Posterior vena cava (tissue), 2 donors: ENCODE measurements at regions of chr1 and their contacts with region 1.

Region 1: GRCh38 chr1:19169642-19170041 is 40.4 kb downstream of the UBR4 start:
- DNase-seq: no peak

Region 2: GRCh38 chr1:19139711-19140110 is 29.9 kb before region 1 on chr1:
- intact Hi-C with region 1: loop called in 1 of 2 experiments (anchors 5 kb)
- DNase-seq: no peak